ENCODE measurements at regions of chrX and their contacts with region 1.

Region 1: GRCh38 chrX:155026726-155027508 is at the start of gene FUNDC2:
- DNase-seq: peak; percentile 93
- H3K4me3 ChIP-seq: peak within 1 kb of the TSS; percentile 93
- H3K27ac ChIP-seq: peak within 1 kb of the TSS; percentile 95
- H3K4me1 ChIP-seq: peaks cover 9% of the 10 kb centered on the region
- CTCF ChIP-seq: no peak
- total RNA-seq, gene FUNDC2: 37.2 and 57.5 TPM in 2 replicates

Region 2: GRCh38 chrX:154762523-154763289 is 264.2 kb before region 1 on chrX and contains the start of gene DKC1:
- CTCF ChIA-PET with region 1: no interaction called
- POLR2A ChIA-PET with region 1: no interaction called
- intact Hi-C with region 1: loop called (anchors 5 kb)
- DNase-seq: peak; percentile 96
- H3K4me3 ChIP-seq: peak within 1 kb of the TSS; percentile 100
- H3K27ac ChIP-seq: peak within 1 kb of the TSS; percentile 88
- H3K4me1 ChIP-seq: peaks cover 18% of the 10 kb centered on the region
- CTCF ChIP-seq: no peak
- total RNA-seq, gene DKC1: 67.7 and 93.3 TPM in 2 replicates

Region 3: GRCh38 chrX:154890990-154891639 is 135.8 kb before region 1 on chrX:
- CTCF ChIA-PET with region 1: no interaction called
- POLR2A ChIA-PET with region 1: no interaction called
- intact Hi-C with region 1: no loop called
- DNase-seq: no peak
- H3K4me3 ChIP-seq: no peak overlapping the region
- H3K27ac ChIP-seq: no peak overlapping the region
- H3K4me1 ChIP-seq: no peaks in the 10 kb centered on the region
- CTCF ChIP-seq: no peak

Region 4: GRCh38 chrX:155070975-155071693 is 44.2 kb after region 1 on chrX and contains the starts of genes BRCC3, CMC4 and MTCP1:
- CTCF ChIA-PET with region 1: no interaction called
- POLR2A ChIA-PET with region 1: interaction called, 4 read pairs
- intact Hi-C with region 1: loop called (anchors 1 kb)
- DNase-seq: peak; percentile 87
- H3K4me3 ChIP-seq: peak within 1 kb of the TSS; percentile 95
- H3K27ac ChIP-seq: peak within 1 kb of the TSS; percentile 81
- H3K4me1 ChIP-seq: peaks cover 33% of the 10 kb centered on the region
- CTCF ChIP-seq: no peak
- total RNA-seq, gene BRCC3: 11.9 and 12.1 TPM in 2 replicates
- total RNA-seq, gene CMC4: 23.9 and 30.6 TPM in 2 replicates
- total RNA-seq, gene MTCP1: 13.4 and 16.9 TPM in 2 replicates

Region 5: DNA sequence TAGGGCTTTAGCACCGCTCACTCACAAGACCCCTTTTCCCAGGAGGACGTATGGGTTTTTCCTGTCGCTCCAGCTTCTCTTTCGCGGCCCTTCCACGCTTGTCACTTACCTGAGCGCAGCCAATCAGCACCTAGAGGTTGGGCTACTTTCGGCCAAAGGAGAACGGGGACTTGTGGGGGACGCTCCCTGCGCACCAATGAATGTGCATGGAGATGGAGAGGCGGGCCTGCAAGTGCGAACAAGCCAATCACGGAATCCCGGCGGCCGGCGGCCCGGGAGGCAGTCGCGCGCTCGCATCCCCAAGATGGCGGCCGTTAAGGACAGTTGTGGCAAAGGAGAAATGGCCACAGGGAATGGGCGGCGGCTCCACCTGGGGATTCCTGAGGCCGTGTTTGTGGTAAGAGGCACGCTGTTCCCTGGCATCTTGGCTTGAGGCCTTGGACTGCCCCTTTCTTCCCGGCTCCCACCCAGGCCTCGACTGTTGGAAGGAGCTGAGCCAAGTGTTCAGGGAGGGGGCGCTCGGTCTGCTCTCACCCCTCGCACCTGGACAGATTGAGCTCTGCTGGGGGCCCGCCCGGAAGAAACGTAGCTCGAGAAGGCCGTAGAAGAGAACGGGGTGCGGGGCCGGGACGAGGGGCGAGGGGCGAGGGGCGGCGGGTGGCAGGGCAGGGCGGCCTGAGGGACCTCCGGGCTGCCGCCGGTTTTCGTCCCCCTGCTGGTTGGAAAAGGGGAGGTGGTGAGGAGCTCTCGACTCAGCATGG is 189.4 kb after region 1 on chrX and contains the start of gene VBP1:
- CTCF ChIA-PET with region 1: no interaction called
- POLR2A ChIA-PET with region 1: no interaction called
- intact Hi-C with region 1: loop called (anchors 5 kb)
- DNase-seq: peak; percentile 92
- H3K4me3 ChIP-seq: peak within 1 kb of the TSS; percentile 77
- H3K27ac ChIP-seq: peak within 1 kb of the TSS; percentile 56
- H3K4me1 ChIP-seq: peaks cover 22% of the 10 kb centered on the region
- CTCF ChIP-seq: peak; percentile 62
- total RNA-seq, gene VBP1: 42.9 and 45.5 TPM in 2 replicates